Activated CD8-positive, alpha-beta T cell treated with anti-CD3 and anti-CD28 coated beads, Interleukin-2, amount 10 ng/mL, durations not matched to agents 7 days and 5 days (primary cell): ENCODE measurements at regions of chr21 and their contacts with region 1.

Region 1: DNA sequence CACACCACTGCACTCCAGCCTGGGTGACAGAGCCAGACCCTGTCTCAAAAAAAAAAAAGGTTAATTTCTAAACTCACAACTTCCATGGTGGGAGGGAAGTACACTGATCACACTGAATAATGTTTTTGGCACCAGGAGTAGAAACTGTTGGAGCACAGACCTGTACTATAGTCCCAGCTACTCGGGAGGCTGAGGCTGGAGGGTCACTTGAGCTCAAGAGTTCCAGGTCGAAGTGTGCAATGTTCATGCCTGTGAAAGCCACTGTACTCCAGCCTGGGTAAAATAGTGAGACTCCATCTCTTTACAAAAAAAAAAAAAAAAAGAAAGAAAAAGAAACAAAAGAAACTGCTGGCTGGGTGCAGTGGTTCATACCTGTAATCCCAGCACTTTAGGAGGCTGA is 35.3 kb downstream of the TMEM50B start:
- DNase-seq: no peak
- ATAC-seq: no peak
- H3K4me3 Mint-ChIP-seq: no peak overlapping the region
- H3K27ac Mint-ChIP-seq: no peak overlapping the region
- H3K4me1 Mint-ChIP-seq: peaks cover 5% of the 10 kb centered on the region
- H3K27me3 Mint-ChIP-seq: no peaks in the 10 kb centered on the region

Region 2: GRCh38 chr21:33212159-33212851 is 232.2 kb before region 1 on chr21:
- CTCF ChIA-PET with region 1: no interaction called
- POLR2A ChIA-PET with region 1: no interaction called
- DNase-seq: peak; percentile 45
- ATAC-seq: peak; percentile 29
- H3K4me3 Mint-ChIP-seq: peak overlapping the region; percentile 35
- H3K27ac Mint-ChIP-seq: peak overlapping the region; percentile 86
- H3K4me1 Mint-ChIP-seq: peaks cover 73% of the 10 kb centered on the region
- H3K27me3 Mint-ChIP-seq: no peaks in the 10 kb centered on the region

Region 3: DNA sequence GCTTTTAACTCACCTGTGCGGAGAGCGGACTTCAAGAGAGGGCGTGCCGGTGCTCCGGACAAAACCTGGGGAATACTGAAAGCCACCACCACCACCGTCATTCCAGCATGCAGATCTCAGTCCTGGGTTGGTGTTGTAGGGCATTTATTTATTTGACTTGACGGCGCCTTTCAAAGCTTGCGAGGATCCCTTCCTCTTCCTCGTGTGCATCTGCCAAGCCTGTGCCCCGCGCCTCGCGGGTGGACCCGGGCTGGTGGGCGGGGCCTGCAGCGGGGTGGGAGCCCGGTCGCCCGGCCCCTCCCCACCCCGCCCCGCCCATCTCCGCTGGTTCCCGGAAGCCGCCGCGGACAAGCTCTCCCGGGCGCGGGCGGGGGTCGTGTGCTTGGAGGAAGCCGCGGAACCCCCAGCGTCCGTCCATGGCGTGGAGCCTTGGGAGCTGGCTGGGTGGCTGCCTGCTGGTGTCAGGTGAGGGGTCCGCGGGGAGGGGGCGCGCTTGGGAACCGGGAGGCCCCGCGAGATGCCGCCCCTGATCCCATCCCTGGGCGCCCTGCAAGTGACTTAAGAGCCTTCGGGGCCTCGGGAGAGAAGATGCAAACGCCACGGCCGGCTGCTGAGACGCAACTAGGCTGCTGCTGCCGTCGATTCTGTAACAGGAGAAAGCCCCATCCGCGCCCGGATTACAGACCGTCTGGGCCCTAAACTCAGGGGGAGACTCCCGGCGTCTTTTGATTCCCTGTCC is 178.3 kb before region 1 on chr21 and contains the start of gene IL10RB:
- CTCF ChIA-PET with region 1: interaction called, 12 read pairs
- POLR2A ChIA-PET with region 1: no interaction called
- DNase-seq: peak; percentile 74
- ATAC-seq: peak; percentile 89
- H3K4me3 Mint-ChIP-seq: peak within 1 kb of the TSS; percentile 96
- H3K27ac Mint-ChIP-seq: peak within 1 kb of the TSS; percentile 93
- H3K4me1 Mint-ChIP-seq: peaks cover 60% of the 10 kb centered on the region
- H3K27me3 Mint-ChIP-seq: no peaks in the 10 kb centered on the region
- total RNA-seq, gene IL10RB: 37.1 to 44.2 TPM

Region 4: DNA sequence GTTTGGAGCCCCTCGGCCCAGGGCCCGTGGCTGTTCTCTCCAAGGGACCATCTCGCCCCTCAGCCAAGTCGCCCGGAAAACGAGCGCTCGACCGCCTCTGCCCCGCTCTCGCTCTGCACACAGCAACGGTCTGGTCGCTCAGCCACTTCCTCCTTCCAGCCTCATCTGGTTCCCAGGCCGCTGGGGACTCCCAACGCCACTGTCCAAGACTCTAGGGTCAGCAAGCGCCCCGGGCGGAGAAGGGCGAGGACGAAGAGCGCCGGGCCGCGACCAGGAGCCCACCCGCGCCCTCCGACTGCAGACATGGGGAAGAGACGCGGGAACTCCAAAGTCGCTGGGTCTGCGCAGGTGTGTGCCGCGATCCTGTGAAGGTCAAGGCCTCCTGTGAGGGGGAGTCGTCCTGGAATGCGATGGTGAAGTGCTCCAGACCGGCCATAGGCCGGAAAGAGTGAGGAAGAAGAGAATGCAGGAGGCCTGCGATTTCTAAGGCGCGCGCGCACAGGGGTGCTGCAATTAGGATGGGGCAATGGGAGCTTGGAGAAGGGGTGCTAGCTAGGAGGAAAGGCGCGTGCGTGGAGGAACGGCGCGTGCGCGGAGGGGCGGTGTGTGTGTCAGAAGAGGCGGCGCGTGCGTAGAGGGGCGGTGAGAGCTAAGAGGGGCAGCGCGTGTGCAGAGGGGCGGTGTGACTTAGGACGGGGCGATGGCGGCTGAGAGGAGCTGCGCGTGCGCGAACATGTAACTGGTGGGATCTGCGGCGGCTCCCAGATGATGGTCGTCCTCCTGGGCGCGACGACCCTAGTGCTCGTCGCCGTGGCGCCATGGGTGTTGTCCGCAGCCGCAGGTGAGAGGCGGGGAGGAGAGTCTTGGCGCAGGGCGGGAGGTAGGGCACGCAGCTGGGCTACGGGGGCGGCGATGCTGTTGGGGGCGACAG is 119.9 kb before region 1 on chr21 and contains the start of gene IFNAR1:
- CTCF ChIA-PET with region 1: interaction called, 18 read pairs
- POLR2A ChIA-PET with region 1: no interaction called
- DNase-seq: peak; percentile 100
- ATAC-seq: peak; percentile 96
- H3K4me3 Mint-ChIP-seq: no peak within 1 kb of the TSS
- H3K27ac Mint-ChIP-seq: no peak within 1 kb of the TSS
- H3K4me1 Mint-ChIP-seq: peaks cover 25% of the 10 kb centered on the region
- H3K27me3 Mint-ChIP-seq: peaks cover 2% of the 10 kb centered on the region
- total RNA-seq, gene IFNAR1: 32.5 to 35.4 TPM

Region 5: DNA sequence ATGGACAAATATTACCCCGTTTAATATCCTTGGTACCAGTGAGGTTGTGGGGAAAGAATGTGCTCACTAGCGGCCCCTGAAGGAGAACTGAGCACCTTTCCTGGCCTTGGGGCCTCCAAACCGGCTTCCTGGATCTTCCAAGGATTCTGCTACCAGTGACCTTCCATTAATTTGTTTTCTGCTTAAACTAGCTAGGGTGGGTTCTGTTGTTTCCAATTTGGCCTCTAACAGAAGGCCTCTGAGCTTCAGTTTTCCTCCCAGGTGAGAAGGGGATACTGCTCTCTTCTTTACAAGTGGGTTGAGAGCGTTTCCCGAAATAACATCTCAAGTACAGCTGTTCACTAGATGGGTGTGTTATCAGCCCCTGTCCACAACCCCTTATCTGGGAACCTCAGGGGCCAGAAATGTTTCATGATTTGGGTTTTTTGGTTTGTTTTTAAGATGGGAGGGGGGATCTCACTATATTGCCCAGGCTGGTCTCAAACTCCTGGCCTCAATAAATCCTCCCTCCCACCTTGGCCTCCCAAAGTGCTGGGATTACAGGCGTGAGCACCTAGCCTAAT is 58.2 kb before region 1 on chr21:
- CTCF ChIA-PET with region 1: interaction called, 14 read pairs
- POLR2A ChIA-PET with region 1: no interaction called
- DNase-seq: no peak
- ATAC-seq: no peak
- H3K4me3 Mint-ChIP-seq: no peak overlapping the region
- H3K27ac Mint-ChIP-seq: no peak overlapping the region
- H3K4me1 Mint-ChIP-seq: peaks cover 47% of the 10 kb centered on the region
- H3K27me3 Mint-ChIP-seq: peaks cover 30% of the 10 kb centered on the region

Region 6: GRCh38 chr21:33461538-33462250 is 17.2 kb after region 1 on chr21:
- CTCF ChIA-PET with region 1: interaction called, 12 read pairs
- POLR2A ChIA-PET with region 1: no interaction called
- DNase-seq: no peak
- ATAC-seq: no peak
- H3K4me3 Mint-ChIP-seq: no peak overlapping the region
- H3K27ac Mint-ChIP-seq: no peak overlapping the region
- H3K4me1 Mint-ChIP-seq: no peaks in the 10 kb centered on the region
- H3K27me3 Mint-ChIP-seq: no peaks in the 10 kb centered on the region

Region 7: DNA sequence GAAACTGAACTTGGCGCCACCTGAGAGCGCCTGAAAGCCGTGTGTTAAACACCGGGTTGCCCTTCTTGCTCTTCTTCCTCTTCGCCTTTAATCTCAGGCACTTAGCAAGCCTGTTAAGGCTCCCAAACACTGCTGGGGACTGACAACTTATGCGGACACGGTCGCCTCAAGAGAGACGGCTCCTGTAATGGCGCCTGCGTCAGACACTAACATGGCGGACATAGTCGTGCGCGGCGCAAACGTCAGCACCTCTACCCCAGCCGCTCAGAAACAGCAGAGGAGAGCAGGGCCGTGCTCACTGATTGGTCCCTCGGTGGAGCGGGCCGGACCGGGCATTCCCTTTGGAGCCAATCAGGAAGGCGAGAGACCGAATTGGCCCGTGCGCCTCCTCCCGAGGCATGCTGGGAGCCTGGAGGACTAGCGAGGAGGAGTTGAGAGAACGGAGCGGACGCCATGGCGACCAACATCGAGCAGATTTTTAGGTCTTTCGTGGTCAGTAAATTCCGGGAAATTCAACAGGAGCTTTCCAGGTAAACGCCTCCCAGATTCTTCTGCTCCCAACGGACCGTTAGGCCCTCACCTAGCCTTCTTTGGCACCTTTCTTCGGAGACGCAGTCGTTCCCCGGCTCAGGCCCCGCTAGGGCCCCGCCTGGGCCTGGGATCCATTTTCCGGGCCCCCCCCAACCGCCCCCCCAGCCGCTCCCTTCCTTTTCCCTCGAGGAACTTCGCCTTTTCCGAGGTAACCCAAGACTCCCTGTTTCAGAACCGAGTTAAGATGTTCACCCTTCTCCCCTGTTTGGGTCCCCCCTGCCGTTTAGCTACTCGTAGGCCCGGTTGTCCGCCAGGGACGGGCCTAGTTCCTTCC is 98.4 kb after region 1 on chr21 and contains the start of gene SON:
- CTCF ChIA-PET with region 1: no interaction called
- POLR2A ChIA-PET with region 1: no interaction called
- DNase-seq: peak; percentile 99
- ATAC-seq: peak; percentile 95
- H3K4me3 Mint-ChIP-seq: peak within 1 kb of the TSS; percentile 95
- H3K27ac Mint-ChIP-seq: peak within 1 kb of the TSS; percentile 99
- H3K4me1 Mint-ChIP-seq: peaks cover 32% of the 10 kb centered on the region
- H3K27me3 Mint-ChIP-seq: no peaks in the 10 kb centered on the region
- total RNA-seq, gene SON: 284 to 285 TPM